Right ventricle myocardium superior (tissue), 1 donor: ENCODE measurements at regions of chr2 and their contacts with region 1.

Region 1: GRCh38 chr2:55718165-55719008 is 24.7 kb upstream of the PNPT1 start:
- DNase-seq: no peak
- ATAC-seq: peak; percentile 64

Region 2: DNA sequence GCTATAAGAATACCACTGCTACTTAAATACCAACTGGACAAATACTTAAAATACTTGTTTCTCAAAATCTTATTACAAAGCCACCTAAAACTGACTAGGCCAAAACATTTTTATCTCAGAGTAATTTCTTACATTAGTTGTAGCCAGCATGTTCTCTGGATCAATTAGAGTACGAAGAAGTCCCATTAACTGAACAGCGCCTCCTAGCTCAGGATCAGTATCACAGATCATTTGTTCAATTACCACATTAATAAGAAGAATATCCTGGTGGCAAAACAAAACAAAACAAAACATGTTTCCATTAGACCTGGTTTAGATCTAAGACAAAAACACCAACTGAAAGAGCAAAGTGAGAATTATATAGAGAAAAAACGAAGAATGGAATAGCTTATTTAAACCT is 137.0 kb before region 1 on chr2:
- intact Hi-C with region 1: no loop called
- DNase-seq: no peak
- ATAC-seq: no peak

Region 3: GRCh38 chr2:56001947-56002346 is 283.6 kb after region 1 on chr2:
- intact Hi-C with region 1: loop called (anchors 5 kb)
- DNase-seq: no peak
- ATAC-seq: no peak

Region 4: DNA sequence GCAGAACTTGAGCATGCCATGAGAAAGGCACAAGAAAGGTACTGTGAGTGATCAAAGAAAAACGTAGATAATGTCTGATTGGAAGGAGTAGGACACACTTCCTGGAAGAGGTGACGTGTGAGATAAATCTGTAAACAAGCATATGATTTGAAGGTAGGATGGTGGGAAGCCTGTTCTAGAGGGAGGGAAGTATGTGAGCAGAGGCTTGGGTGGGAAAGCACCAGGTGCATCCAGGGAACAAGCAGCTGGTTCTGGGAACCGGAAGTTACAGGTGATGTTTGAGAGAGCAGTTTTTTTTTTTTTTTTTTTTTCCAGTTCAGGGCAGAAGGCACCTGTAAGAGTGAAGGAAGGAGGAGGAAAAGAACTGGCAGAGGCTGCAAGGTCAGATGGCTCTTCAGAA is 321.8 kb after region 1 on chr2:
- intact Hi-C with region 1: no loop called
- DNase-seq: no peak
- ATAC-seq: no peak

Region 5: DNA sequence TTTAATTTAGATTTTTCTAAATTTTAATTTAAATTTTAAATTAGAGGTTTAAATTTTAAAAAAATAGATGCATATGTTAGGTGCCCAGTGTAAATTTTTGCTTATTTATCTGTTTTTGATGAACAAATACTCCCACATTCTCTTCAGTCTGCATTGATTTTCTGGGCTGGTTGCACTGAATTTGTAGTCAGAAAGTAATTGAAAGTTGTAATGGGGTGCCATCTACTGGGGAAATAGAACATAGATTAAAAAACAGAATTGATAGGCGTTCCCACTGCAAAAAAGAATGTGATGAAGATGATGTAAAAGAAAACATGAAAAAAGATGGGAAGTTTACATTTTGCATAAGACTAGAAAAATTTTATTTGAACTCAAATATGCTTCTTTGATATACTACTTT is 413.8 kb after region 1 on chr2:
- intact Hi-C with region 1: loop called (anchors 5 kb)
- DNase-seq: no peak
- ATAC-seq: peak; percentile 53